ENCODE measurements at regions of chr6 and their contacts with region 1.

Region 1: GRCh38 chr6:87472525-87473418 is at the start of gene SLC35A1:
- DNase-seq: peak; percentile 74 to 90 (median 80)
- ATAC-seq: peak; percentile 89
- H3K4me3 ChIP-seq: peak within 1 kb of the TSS; percentile 92
- H3K4me3 Mint-ChIP-seq: peak within 1 kb of the TSS; percentile 92
- H3K27ac ChIP-seq: peak within 1 kb of the TSS; percentile 77 to 97
- H3K27ac Mint-ChIP-seq: peak within 1 kb of the TSS; percentile 93
- H3K4me1 ChIP-seq: peaks cover 13% of the 10 kb centered on the region
- H3K4me1 Mint-ChIP-seq: peaks cover 28% of the 10 kb centered on the region
- H3K27me3 ChIP-seq: no peaks in the 10 kb centered on the region
- H3K27me3 Mint-ChIP-seq: peaks cover 3% of the 10 kb centered on the region
- CTCF ChIP-seq: no peak
- total RNA-seq, gene SLC35A1: 3.8 to 4.9 TPM

Region 2: GRCh38 chr6:87139236-87139635 is 333.5 kb before region 1 on chr6:
- CTCF ChIA-PET with region 1: no interaction called
- POLR2A ChIA-PET with region 1: no interaction called
- intact Hi-C with region 1: loop called in 1 of 2 experiments (anchors 5 kb)
- DNase-seq: peak in 8 of 14 experiments; percentile 16 to 82 (median 54)
- ATAC-seq: peak; percentile 85
- H3K4me3 ChIP-seq: no peak overlapping the region
- H3K4me3 Mint-ChIP-seq: no peak overlapping the region
- H3K27ac ChIP-seq: no peak overlapping the region
- H3K27ac Mint-ChIP-seq: no peak overlapping the region
- H3K4me1 ChIP-seq: no peaks in the 10 kb centered on the region
- H3K4me1 Mint-ChIP-seq: peaks cover 5% of the 10 kb centered on the region
- H3K27me3 ChIP-seq: no peaks in the 10 kb centered on the region
- H3K27me3 Mint-ChIP-seq: peaks cover 13% of the 10 kb centered on the region
- CTCF ChIP-seq: peak; percentile 83

Region 3: DNA sequence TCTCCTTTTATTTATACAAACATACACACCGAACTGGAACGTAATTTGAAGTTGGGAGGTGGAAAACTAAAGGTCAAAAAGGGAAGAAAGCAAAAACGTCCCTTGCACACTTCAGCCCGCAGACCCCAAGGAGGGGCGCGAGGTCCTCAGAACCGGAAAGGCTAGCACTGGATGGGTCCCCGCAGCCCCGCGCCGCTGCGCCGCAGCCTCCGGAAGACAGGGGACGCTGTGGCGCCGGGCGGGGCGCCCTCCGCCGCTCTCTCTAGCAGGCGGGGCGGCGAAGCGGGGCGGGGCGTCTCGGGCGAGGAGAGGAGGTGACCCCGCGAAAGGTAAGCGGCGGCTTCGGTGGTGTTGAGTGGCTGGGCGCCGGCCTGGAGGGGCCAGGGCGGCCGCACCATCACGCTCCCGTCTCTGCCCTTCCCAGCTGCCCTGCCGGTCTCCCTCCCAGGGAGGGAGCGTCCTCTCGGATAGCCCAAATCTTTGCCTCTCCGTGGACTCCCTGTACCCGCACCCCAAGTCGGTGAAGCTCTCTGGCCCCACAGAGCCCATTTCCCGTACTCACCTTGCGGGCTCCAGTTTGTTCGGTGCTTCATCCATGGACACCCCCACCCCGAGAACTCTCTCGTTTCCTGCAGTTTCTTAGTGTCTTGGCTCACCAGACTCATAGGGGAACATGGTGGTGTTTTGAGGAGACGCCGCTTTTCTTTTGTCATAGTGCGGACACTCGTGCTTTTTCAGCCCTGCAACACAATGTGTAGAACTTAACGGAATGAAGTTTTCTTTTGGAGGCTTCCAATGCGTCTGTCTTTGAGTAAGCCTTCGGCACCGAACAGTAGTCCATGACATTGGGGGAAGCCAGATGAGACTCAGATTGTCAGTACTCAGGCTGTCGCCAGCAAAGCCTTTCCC is 150.2 kb before region 1 on chr6 and contains the start of gene SMIM8:
- CTCF ChIA-PET with region 1: interaction called, 9 read pairs
- POLR2A ChIA-PET with region 1: interaction called, 4 read pairs
- intact Hi-C with region 1: loop called (anchors 1 kb)
- DNase-seq: peak; percentile 75 to 89 (median 82)
- ATAC-seq: peak; percentile 98
- H3K4me3 ChIP-seq: peak within 1 kb of the TSS; percentile 73
- H3K4me3 Mint-ChIP-seq: peak within 1 kb of the TSS; percentile 92
- H3K27ac ChIP-seq: peak within 1 kb of the TSS; percentile 14 to 52
- H3K27ac Mint-ChIP-seq: peak within 1 kb of the TSS; percentile 67
- H3K4me1 ChIP-seq: peaks cover 9% of the 10 kb centered on the region
- H3K4me1 Mint-ChIP-seq: peaks cover 21% of the 10 kb centered on the region
- H3K27me3 ChIP-seq: no peaks in the 10 kb centered on the region
- H3K27me3 Mint-ChIP-seq: no peaks in the 10 kb centered on the region
- CTCF ChIP-seq: peak; percentile 97
- total RNA-seq, gene SMIM8: 5.4 TPM

Region 4: GRCh38 chr6:87407901-87408720 is 64.7 kb before region 1 on chr6 and contains the start of gene CFAP206:
- CTCF ChIA-PET with region 1: no interaction called
- POLR2A ChIA-PET with region 1: interaction called, 10 read pairs
- intact Hi-C with region 1: loop called (anchors 2 to 5 kb)
- DNase-seq: peak; percentile 63 to 93 (median 77)
- ATAC-seq: peak; percentile 79
- H3K4me3 ChIP-seq: peak within 1 kb of the TSS; percentile 92
- H3K4me3 Mint-ChIP-seq: peak within 1 kb of the TSS; percentile 92
- H3K27ac ChIP-seq: peak within 1 kb of the TSS; percentile 58 to 59
- H3K27ac Mint-ChIP-seq: peak within 1 kb of the TSS; percentile 64
- H3K4me1 ChIP-seq: peaks cover 3% of the 10 kb centered on the region
- H3K4me1 Mint-ChIP-seq: peaks cover 7% of the 10 kb centered on the region
- H3K27me3 ChIP-seq: peaks cover 0 to 3% of the 10 kb centered on the region in 2 experiments
- H3K27me3 Mint-ChIP-seq: peaks cover 30% of the 10 kb centered on the region
- CTCF ChIP-seq: no peak
- total RNA-seq, gene CFAP206: 0.11 TPM in 1 of 2 experiments, not detected in the other

Region 5: GRCh38 chr6:87589693-87590549 is 117.1 kb after region 1 on chr6 and contains the starts of genes ORC3 and RARS2:
- CTCF ChIA-PET with region 1: no interaction called
- POLR2A ChIA-PET with region 1: interaction called, 11 read pairs
- intact Hi-C with region 1: loop called (anchors 2 to 5 kb)
- DNase-seq: peak; percentile 88 to 96 (median 92)
- ATAC-seq: peak; percentile 98
- H3K4me3 ChIP-seq: peak within 1 kb of the TSS; percentile 68
- H3K4me3 Mint-ChIP-seq: peak within 1 kb of the TSS; percentile 89
- H3K27ac ChIP-seq: peak within 1 kb of the TSS; percentile 76 to 80
- H3K27ac Mint-ChIP-seq: peak within 1 kb of the TSS; percentile 87
- H3K4me1 ChIP-seq: peaks cover 37% of the 10 kb centered on the region
- H3K4me1 Mint-ChIP-seq: peaks cover 74% of the 10 kb centered on the region
- H3K27me3 ChIP-seq: no peaks in the 10 kb centered on the region
- H3K27me3 Mint-ChIP-seq: no peaks in the 10 kb centered on the region
- CTCF ChIP-seq: no peak
- total RNA-seq, gene ORC3: 12.1 to 12.9 TPM
- total RNA-seq, gene RARS2: 21.9 to 22.4 TPM

Region 6: DNA sequence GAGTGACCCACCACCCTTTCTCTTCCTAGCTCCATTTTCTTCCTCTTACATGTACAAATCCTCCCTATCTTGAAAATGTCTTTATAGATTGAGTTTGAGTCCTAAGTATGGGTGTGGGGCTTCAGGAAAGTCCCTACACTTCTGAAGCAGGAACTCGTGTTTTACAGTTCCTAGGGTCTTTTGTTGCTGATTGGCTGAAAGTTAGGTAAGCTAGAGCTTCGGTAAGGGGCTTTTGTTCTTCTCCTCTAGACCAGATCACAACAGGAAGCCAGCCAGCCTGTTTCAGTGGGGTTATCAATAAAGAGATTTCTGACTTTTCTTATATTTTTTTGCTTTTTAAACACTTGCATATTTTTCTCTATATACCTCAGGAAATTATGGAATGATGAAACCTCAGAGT is 642.1 kb after region 1 on chr6:
- CTCF ChIA-PET with region 1: no interaction called
- POLR2A ChIA-PET with region 1: no interaction called
- intact Hi-C with region 1: no loop called
- DNase-seq: no peak
- ATAC-seq: no peak
- H3K4me3 ChIP-seq: no peak overlapping the region
- H3K4me3 Mint-ChIP-seq: no peak overlapping the region
- H3K27ac ChIP-seq: no peak overlapping the region
- H3K27ac Mint-ChIP-seq: no peak overlapping the region
- H3K4me1 ChIP-seq: no peaks in the 10 kb centered on the region
- H3K4me1 Mint-ChIP-seq: no peaks in the 10 kb centered on the region
- H3K27me3 ChIP-seq: no peaks in the 10 kb centered on the region
- H3K27me3 Mint-ChIP-seq: peaks cover 52% of the 10 kb centered on the region
- CTCF ChIP-seq: no peak

Measured in CD4-positive, alpha-beta T cell (primary cell).